Mammary epithelial cell (primary cell): ENCODE measurements at regions of chr4 and their contacts with region 1.

Region 1: DNA sequence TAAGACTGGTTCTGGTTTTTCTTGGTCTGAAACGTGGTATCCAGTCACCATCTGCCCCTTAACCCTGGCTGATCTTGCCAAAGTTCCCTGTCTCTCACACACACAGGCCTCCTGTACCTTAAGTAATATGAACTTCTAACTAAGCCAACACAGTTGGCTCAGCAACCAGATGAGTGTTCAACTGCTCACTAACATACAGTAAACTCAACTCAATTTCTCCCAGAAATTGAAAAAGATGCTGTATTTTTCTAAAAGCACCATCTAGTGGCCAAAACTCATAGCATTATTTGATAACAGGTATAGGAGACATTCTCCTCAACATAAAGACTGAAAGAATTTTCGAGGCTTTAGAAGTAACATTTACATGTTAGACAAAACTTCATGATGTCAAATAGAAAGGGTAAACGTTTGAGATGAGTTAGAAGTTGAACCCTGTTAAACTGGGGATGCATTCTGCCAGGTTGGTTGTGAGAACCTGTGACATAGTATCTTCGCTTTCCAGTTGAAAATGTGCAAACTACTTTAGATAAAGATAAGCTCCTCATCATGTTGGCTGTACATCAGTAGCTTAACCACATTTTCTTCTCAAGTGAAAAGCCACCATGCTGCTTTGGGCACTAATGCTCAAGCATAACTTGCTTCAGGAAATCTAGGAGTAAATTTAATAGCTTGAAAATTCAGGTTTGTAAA is 31.2 kb downstream of the CCNI start:
- DNase-seq: peak; percentile 39
- H3K4me3 ChIP-seq: no peak overlapping the region
- H3K27ac ChIP-seq: no peak overlapping the region
- H3K4me1 ChIP-seq: peaks cover 10% of the 10 kb centered on the region
- H3K27me3 ChIP-seq: no peaks in the 10 kb centered on the region
- CTCF ChIP-seq: peak; percentile 63 to 64

Region 2: DNA sequence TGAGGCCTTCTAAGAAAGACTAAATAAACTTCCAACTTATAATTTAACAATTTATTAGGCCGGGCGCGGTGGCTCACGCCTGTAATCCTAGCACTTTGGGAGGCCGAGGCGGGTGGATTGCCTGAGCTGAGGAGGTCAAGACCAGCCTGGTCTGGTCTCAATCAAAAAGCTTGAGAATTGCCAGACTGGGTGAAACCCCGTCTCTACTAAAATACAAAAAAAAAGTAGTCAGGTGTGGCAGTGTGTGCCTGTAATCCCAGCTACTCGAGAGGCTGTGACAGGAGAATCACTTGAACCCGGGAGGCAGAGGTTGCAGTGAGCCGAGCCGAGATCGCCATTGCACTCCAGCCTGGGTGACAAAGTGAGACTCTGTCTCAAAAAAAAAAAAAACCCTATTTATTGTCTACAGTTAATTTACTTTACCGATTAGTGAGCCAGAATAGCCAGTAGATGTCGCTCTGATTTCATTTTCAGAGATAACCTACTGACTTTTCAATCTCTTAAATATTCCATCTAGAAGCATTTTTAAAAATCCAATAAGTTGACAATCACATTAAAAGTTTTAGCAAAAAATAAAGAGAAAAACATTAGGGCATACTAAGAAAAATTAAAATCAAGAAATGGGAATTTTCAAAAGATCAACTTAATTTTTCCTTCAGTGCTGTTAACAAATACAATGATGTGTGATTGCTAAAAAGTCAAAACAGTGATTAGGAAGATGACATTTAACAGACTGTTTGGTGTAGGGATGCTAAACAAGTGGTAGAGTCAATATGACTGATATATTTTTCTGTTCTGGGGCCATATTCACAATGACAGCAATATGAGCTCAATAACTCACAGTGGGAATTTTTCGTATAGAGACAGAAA is 613.9 kb before region 1 on chr4:
- CTCF ChIA-PET with region 1: no interaction called
- dilution Hi-C with region 1: no loop called
- in situ Hi-C with region 1: no loop called
- intact Hi-C with region 1: loop called (anchors 5 kb)
- DNase-seq: peak; percentile 23
- H3K4me3 ChIP-seq: no peak overlapping the region
- H3K27ac ChIP-seq: no peak overlapping the region
- H3K4me1 ChIP-seq: peaks cover 17% of the 10 kb centered on the region
- H3K27me3 ChIP-seq: no peaks in the 10 kb centered on the region
- CTCF ChIP-seq: peak; percentile 57 to 65

Region 3: GRCh38 chr4:76748649-76749048 is 296.0 kb before region 1 on chr4:
- CTCF ChIA-PET with region 1: no interaction called
- dilution Hi-C with region 1: no loop called
- in situ Hi-C with region 1: no loop called
- intact Hi-C with region 1: loop called (anchors 5 kb)
- DNase-seq: no peak
- H3K4me3 ChIP-seq: no peak overlapping the region
- H3K27ac ChIP-seq: no peak overlapping the region
- H3K4me1 ChIP-seq: peaks cover 34% of the 10 kb centered on the region
- H3K27me3 ChIP-seq: no peaks in the 10 kb centered on the region
- CTCF ChIP-seq: peak; percentile 32 to 48

Region 4: DNA sequence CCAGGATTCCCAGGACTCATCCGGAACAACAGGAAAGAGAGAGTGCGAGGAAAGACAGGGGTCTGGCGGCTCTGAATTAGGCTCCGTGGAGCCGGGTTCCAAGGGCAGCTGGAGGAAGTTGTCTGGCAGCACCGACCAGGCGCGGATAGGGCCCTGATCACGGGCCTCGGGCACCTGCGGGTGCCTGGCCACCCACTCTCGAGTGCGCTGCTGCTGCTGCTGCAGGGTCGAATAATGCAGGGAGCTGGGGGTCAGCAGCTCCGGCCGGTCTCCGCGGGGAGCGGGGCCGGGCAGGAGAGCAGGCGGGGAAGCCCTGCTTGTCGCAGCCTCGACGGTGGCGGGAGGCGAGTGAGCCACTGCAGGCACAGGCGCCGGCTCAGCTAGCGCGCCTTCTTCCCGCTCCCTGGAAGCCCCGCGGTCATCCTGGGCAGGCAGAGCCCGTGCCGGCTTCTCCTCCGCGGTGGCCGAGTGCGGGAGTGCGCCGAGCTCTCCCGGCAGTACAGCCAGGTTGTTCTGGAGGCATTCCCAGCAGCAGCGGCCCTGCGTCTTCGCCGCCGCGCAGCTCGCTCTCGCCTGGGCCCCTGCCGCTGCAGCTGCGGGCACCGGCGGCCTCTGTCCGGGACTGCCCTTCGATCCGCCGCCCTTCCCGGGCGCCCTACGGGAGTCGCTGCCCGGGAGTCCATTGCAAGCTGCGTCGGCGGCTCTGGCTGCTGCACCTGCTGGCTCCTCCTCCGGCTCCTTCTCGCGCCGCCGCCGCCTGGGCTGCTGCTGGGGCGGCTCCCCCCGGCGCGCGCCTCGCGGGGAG is 147.7 kb before region 1 on chr4:
- CTCF ChIA-PET with region 1: no interaction called
- dilution Hi-C with region 1: no loop called
- in situ Hi-C with region 1: no loop called
- intact Hi-C with region 1: loop called (anchors 5 kb)
- DNase-seq: peak; percentile 48
- H3K4me3 ChIP-seq: peak overlapping the region; percentile 63 to 74 (median 70)
- H3K27ac ChIP-seq: no peak overlapping the region
- H3K4me1 ChIP-seq: peaks cover 33% of the 10 kb centered on the region
- H3K27me3 ChIP-seq: no peaks in the 10 kb centered on the region
- CTCF ChIP-seq: no peak

Region 5: DNA sequence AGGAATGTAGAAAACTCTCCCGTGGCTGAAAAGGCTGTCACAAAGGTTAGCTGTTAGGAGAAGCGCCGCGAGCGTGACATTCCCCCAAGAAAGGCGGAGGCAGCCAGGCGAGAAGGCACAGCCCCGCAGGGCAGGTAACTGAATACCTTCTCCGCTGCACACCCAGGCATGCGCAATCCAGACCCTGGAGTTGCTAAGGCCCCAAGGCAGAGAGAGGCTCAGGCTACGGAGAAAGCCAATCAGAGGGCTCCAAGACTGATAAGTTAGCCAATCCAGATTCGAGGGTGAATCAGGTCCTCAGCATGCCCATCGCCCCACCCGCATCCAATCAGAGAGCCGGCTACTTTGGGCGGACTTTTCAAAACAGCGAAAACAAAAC is 111.9 kb after region 1 on chr4:
- CTCF ChIA-PET with region 1: no interaction called
- dilution Hi-C with region 1: no loop called
- in situ Hi-C with region 1: no loop called
- intact Hi-C with region 1: loop called (anchors 2 kb)
- DNase-seq: peak; percentile 100
- H3K4me3 ChIP-seq: peak overlapping the region; percentile 91 to 99 (median 99)
- H3K27ac ChIP-seq: peak overlapping the region; percentile 96
- H3K4me1 ChIP-seq: peaks cover 21% of the 10 kb centered on the region
- H3K27me3 ChIP-seq: no peaks in the 10 kb centered on the region
- CTCF ChIP-seq: no peak

Region 6: GRCh38 chr4:77220828-77221613 is 176.4 kb after region 1 on chr4:
- CTCF ChIA-PET with region 1: no interaction called
- dilution Hi-C with region 1: no loop called
- in situ Hi-C with region 1: no loop called
- intact Hi-C with region 1: no loop called
- DNase-seq: no peak
- H3K4me3 ChIP-seq: no peak overlapping the region
- H3K27ac ChIP-seq: no peak overlapping the region
- H3K4me1 ChIP-seq: no peaks in the 10 kb centered on the region
- H3K27me3 ChIP-seq: no peaks in the 10 kb centered on the region
- CTCF ChIP-seq: no peak